Mammary epithelial cell (primary cell): ENCODE measurements at regions of chrX and their contacts with region 1.

Region 1: DNA sequence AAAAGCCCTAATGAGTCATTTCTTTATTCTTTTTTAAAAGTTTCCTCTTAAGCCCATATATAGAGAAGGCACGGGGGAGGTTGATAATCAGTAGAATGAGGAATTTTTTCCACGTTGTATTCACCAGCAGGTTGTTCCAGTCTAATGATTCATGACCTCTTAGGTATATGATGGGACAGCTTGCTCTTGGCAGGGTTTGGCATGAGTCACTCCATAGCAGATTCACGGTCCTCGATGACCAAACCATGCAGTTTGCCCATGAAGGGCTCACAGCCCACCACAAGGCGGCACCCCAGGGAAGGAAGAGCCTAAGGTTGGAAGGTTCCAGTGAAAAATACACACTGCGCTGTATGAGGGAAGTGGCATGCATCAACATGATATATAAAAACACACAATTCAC is 623.8 kb upstream of the DIPK2B start:
- DNase-seq: peak; percentile 98
- H3K4me3 ChIP-seq: no peak overlapping the region
- H3K27ac ChIP-seq: peak overlapping the region; percentile 67
- H3K4me1 ChIP-seq: peaks cover 11% of the 10 kb centered on the region
- H3K27me3 ChIP-seq: no peaks in the 10 kb centered on the region
- CTCF ChIP-seq: peak; percentile 96 to 98

Region 2: GRCh38 chrX:45769761-45770582 is 54.5 kb before region 1 on chrX:
- CTCF ChIA-PET with region 1: no interaction called
- dilution Hi-C with region 1: no loop called
- in situ Hi-C with region 1: no loop called
- intact Hi-C with region 1: loop called (anchors 1 kb)
- DNase-seq: peak; percentile 86
- H3K4me3 ChIP-seq: peak overlapping the region; percentile 59 to 98 (median 91)
- H3K27ac ChIP-seq: peak overlapping the region; percentile 98
- H3K4me1 ChIP-seq: peaks cover 41% of the 10 kb centered on the region
- H3K27me3 ChIP-seq: no peaks in the 10 kb centered on the region
- CTCF ChIP-seq: no peak

Region 3: GRCh38 chrX:45843518-45843917 is 19.0 kb after region 1 on chrX:
- CTCF ChIA-PET with region 1: no interaction called
- dilution Hi-C with region 1: no loop called
- in situ Hi-C with region 1: no loop called
- intact Hi-C with region 1: loop called (anchors 1 kb)
- DNase-seq: no peak
- H3K4me3 ChIP-seq: no peak overlapping the region
- H3K27ac ChIP-seq: no peak overlapping the region
- H3K4me1 ChIP-seq: peaks cover 42% of the 10 kb centered on the region
- H3K27me3 ChIP-seq: no peaks in the 10 kb centered on the region
- CTCF ChIP-seq: peak; percentile 2 to 43

Region 4: DNA sequence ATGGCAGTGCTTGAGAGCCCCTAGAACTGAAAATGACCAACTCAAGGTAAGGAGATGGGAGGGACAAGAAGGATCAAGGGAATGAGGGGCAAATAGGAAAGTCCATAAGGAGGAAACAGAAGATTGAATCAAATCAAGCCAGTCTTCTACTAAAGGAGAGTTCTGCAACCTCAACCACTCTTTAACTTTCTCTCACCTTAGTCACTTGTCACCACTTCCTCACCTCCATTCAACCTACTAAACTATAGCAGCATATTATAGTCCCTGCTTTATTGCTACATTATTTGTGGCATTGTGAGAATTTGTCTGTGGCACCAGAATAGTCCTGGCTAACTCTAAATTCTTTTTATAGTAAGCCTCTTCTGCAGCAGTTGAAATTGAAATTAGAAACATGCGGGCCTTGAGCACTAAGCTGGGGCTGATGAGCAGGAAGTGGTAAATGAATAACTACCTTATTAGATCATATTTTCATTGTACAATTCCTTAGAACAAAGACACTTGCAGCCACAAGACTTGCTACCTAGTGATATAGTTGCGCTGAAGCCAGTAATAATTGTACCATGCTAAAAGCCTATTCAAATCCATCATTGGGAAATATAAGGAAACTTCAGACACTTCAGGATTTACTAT is 383.9 kb after region 1 on chrX:
- CTCF ChIA-PET with region 1: no interaction called
- dilution Hi-C with region 1: no loop called
- in situ Hi-C with region 1: no loop called
- intact Hi-C with region 1: loop called (anchors 10 kb)
- DNase-seq: peak; percentile 65
- H3K4me3 ChIP-seq: no peak overlapping the region
- H3K27ac ChIP-seq: peak overlapping the region; percentile 50
- H3K4me1 ChIP-seq: peaks cover 41% of the 10 kb centered on the region
- H3K27me3 ChIP-seq: no peaks in the 10 kb centered on the region
- CTCF ChIP-seq: no peak

Region 5: DNA sequence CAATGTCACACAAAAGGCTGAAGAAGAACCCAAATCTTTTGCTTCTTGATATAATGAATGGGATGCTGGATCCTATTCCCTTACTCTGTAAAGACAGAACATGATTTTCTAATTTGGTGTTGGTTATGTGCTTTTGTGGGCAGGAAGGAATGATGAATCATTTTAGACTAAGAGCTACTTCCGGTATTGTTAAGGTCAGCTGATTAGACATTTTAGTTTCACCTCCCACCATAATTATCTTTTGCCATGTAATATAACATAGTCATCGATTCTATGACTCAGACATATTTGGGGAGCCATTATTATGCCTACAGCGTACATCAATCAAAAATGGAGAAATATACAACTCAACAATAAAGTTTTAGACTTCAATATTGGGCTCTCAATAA is 455.4 kb after region 1 on chrX:
- CTCF ChIA-PET with region 1: no interaction called
- dilution Hi-C with region 1: no loop called
- in situ Hi-C with region 1: no loop called
- intact Hi-C with region 1: loop called (anchors 1 kb)
- DNase-seq: peak; percentile 78
- H3K4me3 ChIP-seq: no peak overlapping the region
- H3K27ac ChIP-seq: peak overlapping the region; percentile 69
- H3K4me1 ChIP-seq: peaks cover 11% of the 10 kb centered on the region
- H3K27me3 ChIP-seq: no peaks in the 10 kb centered on the region
- CTCF ChIP-seq: no peak

Region 6: DNA sequence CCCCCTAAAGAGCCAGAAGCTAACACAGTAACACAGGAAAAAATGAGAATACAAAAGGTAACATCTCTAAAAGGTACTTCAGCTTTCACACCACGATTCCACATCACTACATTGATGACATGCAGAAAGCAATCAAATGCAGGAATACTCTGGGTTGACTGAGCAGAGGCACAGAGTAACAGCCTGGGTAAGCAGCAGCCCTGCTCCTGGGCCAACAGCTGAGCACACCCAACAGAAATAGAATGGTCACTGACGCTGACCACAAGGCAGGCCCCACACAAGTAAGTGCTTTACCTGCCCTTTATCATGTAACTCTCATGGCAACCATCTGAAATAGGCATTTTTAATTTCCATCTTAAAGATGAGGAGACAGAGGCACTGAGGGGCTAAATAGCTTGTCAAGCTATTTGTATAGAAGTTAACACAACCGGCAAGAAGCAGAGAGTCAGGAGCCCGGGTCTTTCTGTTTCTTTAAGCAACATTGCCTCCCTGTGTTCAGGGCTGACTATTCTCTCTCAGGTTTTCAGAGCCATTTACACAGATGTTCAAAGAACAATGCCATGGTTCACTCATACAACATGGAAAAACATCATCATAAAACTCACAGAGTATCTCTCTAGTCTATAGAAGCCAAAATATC is 551.9 kb after region 1 on chrX:
- CTCF ChIA-PET with region 1: interaction called, 10 read pairs
- dilution Hi-C with region 1: no loop called
- in situ Hi-C with region 1: loop called (anchors 25 kb)
- intact Hi-C with region 1: loop called (anchors 1 kb)
- DNase-seq: peak; percentile 61
- H3K4me3 ChIP-seq: no peak overlapping the region
- H3K27ac ChIP-seq: peak overlapping the region; percentile 7
- H3K4me1 ChIP-seq: peaks cover 20% of the 10 kb centered on the region
- H3K27me3 ChIP-seq: no peaks in the 10 kb centered on the region
- CTCF ChIP-seq: peak; percentile 50 to 61